Mammary epithelial cell (primary cell): ENCODE measurements at regions of chr14 and their contacts with region 1.

Region 1: DNA sequence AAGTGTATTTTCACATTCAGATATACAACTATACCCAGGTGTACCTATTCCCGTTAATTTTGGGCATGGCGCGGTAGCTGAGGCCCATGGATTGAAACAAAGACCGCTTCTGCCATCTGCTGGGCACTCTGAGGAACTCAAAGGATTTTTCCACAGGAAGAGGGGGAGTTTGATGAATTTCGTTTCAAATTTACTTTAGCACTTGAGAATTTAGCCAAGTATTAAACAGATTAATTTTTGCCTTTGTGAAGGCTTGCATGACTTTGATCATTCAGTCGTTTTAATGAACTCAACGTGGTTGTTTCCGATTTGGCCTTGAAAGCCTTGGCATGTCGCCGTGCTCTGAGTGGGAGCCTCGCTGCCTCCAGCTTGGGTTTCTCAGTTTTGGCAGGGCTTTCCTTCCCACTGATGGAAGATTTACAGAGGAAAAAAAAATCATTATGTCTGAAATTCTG is 153.2 kb upstream of the DDHD1 start:
- DNase-seq: no peak
- H3K4me3 ChIP-seq: peak overlapping the region; percentile 36 to 57 (median 49)
- H3K27ac ChIP-seq: no peak overlapping the region
- H3K4me1 ChIP-seq: peaks cover 10% of the 10 kb centered on the region
- H3K27me3 ChIP-seq: no peaks in the 10 kb centered on the region
- CTCF ChIP-seq: peak; percentile 63 to 77

Region 2: DNA sequence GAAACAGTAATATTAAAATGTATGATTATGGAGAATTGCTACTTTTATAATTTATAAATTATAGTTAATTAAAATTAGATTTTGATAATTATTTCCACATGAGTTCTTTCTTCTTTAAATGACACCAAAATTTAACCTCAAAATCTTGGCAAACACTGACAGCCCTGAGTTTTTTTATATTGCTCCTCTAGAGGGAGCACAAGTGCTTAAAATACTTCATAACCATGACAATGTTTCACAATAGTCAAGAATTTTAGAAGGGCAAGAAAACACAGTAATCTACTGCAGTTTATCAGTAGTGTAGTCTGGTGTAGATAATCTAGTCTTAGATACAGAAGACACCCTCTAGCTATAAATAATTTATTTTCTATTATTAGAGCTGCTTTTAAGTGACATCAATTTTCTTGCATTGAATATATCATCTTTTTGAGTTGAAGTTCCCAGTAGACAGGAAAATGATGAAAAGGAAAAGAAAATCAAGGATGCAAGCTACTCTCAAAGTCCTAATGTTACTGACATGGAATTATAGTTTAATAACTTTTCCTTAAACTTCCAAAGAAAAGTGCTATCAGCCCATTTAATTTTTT is 1006.5 kb before region 1 on chr14:
- CTCF ChIA-PET with region 1: no interaction called
- dilution Hi-C with region 1: no loop called
- in situ Hi-C with region 1: no loop called
- intact Hi-C with region 1: loop called (anchors 5 kb)
- DNase-seq: peak; percentile 26
- H3K4me3 ChIP-seq: no peak overlapping the region
- H3K27ac ChIP-seq: no peak overlapping the region
- H3K4me1 ChIP-seq: no peaks in the 10 kb centered on the region
- H3K27me3 ChIP-seq: no peaks in the 10 kb centered on the region
- CTCF ChIP-seq: peak; percentile 54 to 59

Region 3: GRCh38 chr14:52801015-52801712 is 505.1 kb before region 1 on chr14:
- CTCF ChIA-PET with region 1: no interaction called
- dilution Hi-C with region 1: no loop called
- in situ Hi-C with region 1: loop called in 1 of 2 experiments (anchors 25 kb)
- intact Hi-C with region 1: no loop called
- DNase-seq: no peak
- H3K4me3 ChIP-seq: no peak overlapping the region
- H3K27ac ChIP-seq: no peak overlapping the region
- H3K4me1 ChIP-seq: no peaks in the 10 kb centered on the region
- H3K27me3 ChIP-seq: no peaks in the 10 kb centered on the region
- CTCF ChIP-seq: no peak

Region 4: DNA sequence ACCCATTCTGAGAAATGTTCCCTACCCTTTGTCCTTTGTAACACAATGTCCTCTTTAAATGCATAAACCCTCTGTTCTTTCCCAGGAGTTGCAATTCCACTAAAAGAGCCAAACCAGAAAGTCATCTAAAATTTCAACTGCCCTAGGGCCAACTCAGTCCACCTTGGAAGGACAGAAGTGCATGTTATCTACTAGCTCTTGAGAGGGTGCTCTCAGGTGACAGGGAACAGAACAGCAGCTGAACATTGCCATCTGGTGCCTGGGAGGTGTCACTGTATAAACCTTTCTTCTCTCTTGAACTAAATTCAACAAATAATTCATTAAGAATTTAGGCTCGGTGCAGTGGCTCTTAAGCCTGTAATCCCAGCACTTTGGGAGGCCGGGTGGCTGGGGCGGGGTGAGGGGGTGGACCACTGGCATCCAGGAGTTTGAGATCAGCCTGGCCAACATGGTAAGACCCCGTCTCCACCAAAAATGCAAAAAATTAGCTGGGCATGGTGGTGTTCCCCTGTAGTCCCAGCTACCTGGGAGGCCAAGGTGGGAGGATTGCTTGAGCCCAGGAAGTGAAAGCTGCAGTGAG is 345.1 kb before region 1 on chr14:
- CTCF ChIA-PET with region 1: no interaction called
- dilution Hi-C with region 1: no loop called
- in situ Hi-C with region 1: no loop called
- intact Hi-C with region 1: loop called (anchors 1 kb)
- DNase-seq: peak; percentile 53
- H3K4me3 ChIP-seq: no peak overlapping the region
- H3K27ac ChIP-seq: no peak overlapping the region
- H3K4me1 ChIP-seq: no peaks in the 10 kb centered on the region
- H3K27me3 ChIP-seq: no peaks in the 10 kb centered on the region
- CTCF ChIP-seq: peak; percentile 66 to 82

Region 5: DNA sequence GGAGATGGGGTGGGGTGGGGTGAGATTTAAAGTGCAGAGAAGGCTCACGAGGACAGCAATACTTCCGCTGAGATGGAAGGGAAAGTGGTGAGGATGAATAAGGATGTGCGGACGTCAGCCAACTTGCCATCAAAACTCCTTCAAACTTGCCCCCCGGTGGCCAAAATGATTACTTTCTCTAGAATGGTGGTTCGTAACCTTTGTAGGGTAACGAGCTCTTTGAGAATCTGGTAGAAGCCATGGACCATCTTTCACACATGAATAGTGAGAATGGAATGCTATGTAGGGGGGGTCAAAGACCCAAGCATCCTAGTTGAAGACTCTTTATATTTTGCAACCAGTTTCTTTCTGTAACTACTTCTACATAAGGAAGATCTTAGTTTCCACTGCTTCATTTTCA is 92.8 kb after region 1 on chr14:
- CTCF ChIA-PET with region 1: no interaction called
- dilution Hi-C with region 1: no loop called
- in situ Hi-C with region 1: no loop called
- intact Hi-C with region 1: loop called (anchors 2 kb)
- DNase-seq: no peak
- H3K4me3 ChIP-seq: no peak overlapping the region
- H3K27ac ChIP-seq: no peak overlapping the region
- H3K4me1 ChIP-seq: no peaks in the 10 kb centered on the region
- H3K27me3 ChIP-seq: no peaks in the 10 kb centered on the region
- CTCF ChIP-seq: peak; percentile 39 to 42

Region 6: DNA sequence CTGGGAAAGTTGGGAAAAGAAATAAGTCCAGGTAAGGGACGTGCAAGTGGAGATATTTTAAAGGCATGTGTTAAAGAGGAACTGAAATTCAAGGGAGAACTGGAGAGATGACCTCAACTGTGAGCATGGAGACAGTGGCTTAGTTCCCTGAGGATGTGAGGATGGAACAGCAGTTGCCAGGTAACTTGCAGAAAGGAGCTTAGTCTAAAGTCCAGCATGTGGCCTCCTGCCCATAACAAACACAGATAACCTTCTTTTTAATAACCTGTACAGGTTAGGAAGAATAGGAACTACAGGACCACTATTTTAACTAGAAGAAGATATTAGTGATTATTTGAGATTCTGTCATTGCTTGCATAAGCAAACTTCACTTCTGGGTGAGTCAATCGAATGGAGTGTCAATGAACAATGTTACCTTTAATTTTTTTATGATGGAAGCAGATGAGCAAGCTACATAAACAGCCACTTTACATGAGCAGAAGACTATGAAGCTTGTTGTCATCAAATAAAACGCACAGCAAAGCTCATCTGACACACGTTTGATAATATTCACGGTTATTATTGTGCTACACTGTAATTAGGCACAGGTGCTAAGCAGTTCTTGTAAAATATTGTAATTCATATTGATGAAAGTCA is 138.5 kb after region 1 on chr14:
- CTCF ChIA-PET with region 1: no interaction called
- dilution Hi-C with region 1: no loop called
- in situ Hi-C with region 1: no loop called
- intact Hi-C with region 1: no loop called
- DNase-seq: peak; percentile 37
- H3K4me3 ChIP-seq: no peak overlapping the region
- H3K27ac ChIP-seq: no peak overlapping the region
- H3K4me1 ChIP-seq: no peaks in the 10 kb centered on the region
- H3K27me3 ChIP-seq: no peaks in the 10 kb centered on the region
- CTCF ChIP-seq: no peak